T-cell (primary cell): ENCODE measurements at regions of chr21 and their contacts with region 1.

Region 1: DNA sequence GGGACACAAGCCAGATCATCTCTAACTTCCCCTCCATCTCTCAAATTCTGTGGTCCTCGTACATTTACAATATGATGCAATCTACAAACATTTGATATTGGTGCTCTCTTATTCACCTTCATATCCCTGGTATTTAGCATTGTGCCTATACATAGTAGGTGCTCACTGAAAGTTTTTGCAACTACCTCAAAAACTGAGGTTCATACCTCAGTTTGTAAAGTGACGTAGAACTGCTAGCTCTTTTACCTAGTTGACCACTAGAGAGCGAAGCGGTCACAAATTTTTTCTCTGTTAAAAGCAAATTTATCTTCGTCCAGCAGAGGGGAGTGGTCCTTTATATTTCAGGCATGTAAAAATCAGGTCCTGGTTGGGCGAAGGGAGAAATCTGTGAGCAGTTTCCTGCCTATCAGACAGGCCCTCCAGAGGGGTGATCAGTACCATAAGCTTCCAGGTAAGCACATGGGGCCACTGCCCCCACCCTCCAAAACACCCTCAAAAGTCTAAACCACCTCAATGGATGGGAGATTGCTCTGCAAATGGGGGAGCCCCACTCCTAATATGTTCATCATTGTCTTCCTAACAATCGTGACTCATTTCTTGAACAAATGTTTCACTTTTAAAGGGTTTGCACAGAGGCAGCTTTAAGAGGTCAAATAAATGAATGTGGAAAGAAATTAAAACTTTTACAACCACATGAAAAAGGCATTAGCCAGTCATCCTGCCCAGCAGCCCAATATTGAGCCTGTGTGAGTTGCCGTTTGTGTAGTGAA is 10.6 kb upstream of the HLCS start:
- DNase-seq: peak in 8 of 35 experiments; percentile 5 to 65 (median 24)
- ATAC-seq: peak; percentile 54 to 67 (median 58)
- H3K4me3 ChIP-seq: no peak overlapping the region
- H3K4me3 Mint-ChIP-seq: no peak overlapping the region
- H3K27ac ChIP-seq: no peak overlapping the region
- H3K27ac Mint-ChIP-seq: peak overlapping the region; percentile 31 to 52
- H3K4me1 ChIP-seq: peaks cover 5 to 17% of the 10 kb centered on the region in 2 experiments
- H3K4me1 Mint-ChIP-seq: peaks cover 10 to 27% (median 20%) of the 10 kb centered on the region in 3 donors
- H3K27me3 ChIP-seq: no peaks in the 10 kb centered on the region
- H3K27me3 Mint-ChIP-seq: peaks cover 0 to 5% of the 10 kb centered on the region in 2 donors

Region 2: GRCh38 chr21:36990508-36991205 is 13.6 kb after region 1 on chr21:
- CTCF ChIA-PET with region 1: interaction called, 6 to 10 read pairs
- POLR2A ChIA-PET with region 1: interaction called in 1 of 2 experiments, 7 read pairs
- DNase-seq: no peak
- ATAC-seq: no peak
- H3K4me3 ChIP-seq: peak overlapping the region in 1 of 2 donors; percentile 16
- H3K4me3 Mint-ChIP-seq: peak overlapping the region; percentile 75 to 91 (median 88)
- H3K27ac ChIP-seq: no peak overlapping the region
- H3K27ac Mint-ChIP-seq: peak overlapping the region; percentile 46 to 85
- H3K4me1 ChIP-seq: peaks cover 0 to 19% of the 10 kb centered on the region in 2 experiments
- H3K4me1 Mint-ChIP-seq: peaks cover 24 to 33% (median 25%) of the 10 kb centered on the region in 3 donors
- H3K27me3 ChIP-seq: no peaks in the 10 kb centered on the region
- H3K27me3 Mint-ChIP-seq: no peaks in the 10 kb centered on the region

Region 3: DNA sequence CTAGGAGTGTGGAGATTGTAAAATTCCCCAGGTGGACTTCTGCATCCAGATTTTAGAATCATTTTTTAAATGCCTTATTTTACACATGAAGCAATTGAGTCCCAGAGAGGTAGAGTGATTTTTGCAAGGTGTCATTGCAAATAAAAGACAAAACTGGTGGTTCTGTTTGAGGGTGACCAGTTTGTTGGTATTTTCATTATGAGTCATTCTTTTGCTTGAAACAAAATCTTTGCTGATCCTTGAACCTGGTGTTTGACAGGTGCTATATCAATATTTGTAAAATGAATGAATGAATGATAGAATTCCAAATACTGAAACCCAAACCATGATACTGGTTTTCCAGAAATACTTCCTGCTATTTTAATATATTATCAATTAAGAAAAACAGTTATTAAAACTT is 140.1 kb after region 1 on chr21:
- CTCF ChIA-PET with region 1: no interaction called
- POLR2A ChIA-PET with region 1: interaction called in 1 of 2 experiments, 12 read pairs
- DNase-seq: no peak
- ATAC-seq: no peak
- H3K4me3 ChIP-seq: no peak overlapping the region
- H3K4me3 Mint-ChIP-seq: no peak overlapping the region
- H3K27ac ChIP-seq: no peak overlapping the region
- H3K27ac Mint-ChIP-seq: no peak overlapping the region
- H3K4me1 ChIP-seq: no peaks in the 10 kb centered on the region
- H3K4me1 Mint-ChIP-seq: peaks cover 5 to 16% (median 14%) of the 10 kb centered on the region in 3 donors
- H3K27me3 ChIP-seq: no peaks in the 10 kb centered on the region
- H3K27me3 Mint-ChIP-seq: no peaks in the 10 kb centered on the region